Activated CD8-positive, alpha-beta T cell treated with anti-CD3 and anti-CD28 coated beads for 36 hours (primary cell): ENCODE measurements at regions of chr5 and their contacts with region 1.

Region 1: GRCh38 chr5:173331956-173332479 is 3.8 kb upstream of the STC2 start:
- DNase-seq: peak; percentile 95
- ATAC-seq: peak; percentile 76
- H3K4me3 Mint-ChIP-seq: no peak overlapping the region
- H3K27ac Mint-ChIP-seq: no peak overlapping the region
- H3K4me1 Mint-ChIP-seq: peaks cover 16% of the 10 kb centered on the region
- H3K27me3 Mint-ChIP-seq: peaks cover 40% of the 10 kb centered on the region
- CTCF ChIP-seq: peak; percentile 82

Region 2: GRCh38 chr5:173288632-173289031 is 43.4 kb before region 1 on chr5:
- CTCF ChIA-PET with region 1: interaction called, 180 read pairs
- POLR2A ChIA-PET with region 1: interaction called, 4 read pairs
- intact Hi-C with region 1: no loop called
- DNase-seq: no peak
- ATAC-seq: no peak
- H3K4me3 Mint-ChIP-seq: no peak overlapping the region
- H3K27ac Mint-ChIP-seq: no peak overlapping the region
- H3K4me1 Mint-ChIP-seq: peaks cover 14% of the 10 kb centered on the region
- H3K27me3 Mint-ChIP-seq: peaks cover 50% of the 10 kb centered on the region
- CTCF ChIP-seq: no peak

Region 3: DNA sequence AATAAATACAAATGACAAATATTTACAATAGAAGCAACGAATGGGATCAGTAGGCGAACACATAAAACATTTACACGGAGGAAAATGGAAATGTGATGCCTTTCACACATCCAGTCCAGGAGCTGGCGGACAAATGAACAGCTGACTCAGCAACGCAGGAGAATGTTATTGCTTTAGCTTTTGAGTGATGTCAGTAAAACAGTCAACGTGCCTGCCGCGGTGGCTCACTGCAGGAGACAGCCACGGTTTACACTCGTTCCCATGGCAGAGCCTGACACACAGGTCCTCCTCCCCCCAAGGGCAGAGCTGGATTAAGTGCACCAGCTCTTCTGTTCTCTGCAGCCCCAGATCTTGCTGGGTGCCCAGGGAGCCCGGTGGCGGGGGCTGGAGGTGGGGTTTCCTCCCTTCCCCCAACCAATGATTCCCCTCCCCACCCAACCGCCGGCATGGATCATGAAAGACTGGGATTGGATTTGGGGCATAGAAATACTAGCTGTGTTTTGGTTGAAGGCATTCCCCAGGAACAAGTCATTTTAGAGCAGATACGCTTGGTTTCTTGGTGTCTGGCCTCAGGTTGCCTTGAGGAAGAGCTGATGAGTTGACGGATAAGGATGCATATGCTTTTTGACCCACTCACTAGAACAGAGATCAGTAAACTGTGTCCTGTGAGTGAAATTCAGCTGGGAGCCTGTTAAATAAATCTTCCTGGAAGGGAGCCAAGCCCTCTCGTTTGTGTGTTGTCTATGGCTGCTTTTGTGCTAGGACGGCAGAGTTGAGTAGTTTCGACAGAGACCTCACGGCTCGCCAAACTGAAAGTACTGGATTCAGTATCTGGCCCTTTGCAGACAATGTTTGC is 16.3 kb before region 1 on chr5:
- CTCF ChIA-PET with region 1: interaction called, 12 read pairs
- POLR2A ChIA-PET with region 1: interaction called, 11 read pairs
- intact Hi-C with region 1: no loop called
- DNase-seq: peak; percentile 29
- ATAC-seq: peak; percentile 52
- H3K4me3 Mint-ChIP-seq: no peak overlapping the region
- H3K27ac Mint-ChIP-seq: no peak overlapping the region
- H3K4me1 Mint-ChIP-seq: no peaks in the 10 kb centered on the region
- H3K27me3 Mint-ChIP-seq: peaks cover 15% of the 10 kb centered on the region
- CTCF ChIP-seq: no peak

Region 4: GRCh38 chr5:173941758-173942401 is 609.9 kb after region 1 on chr5:
- CTCF ChIA-PET with region 1: no interaction called
- POLR2A ChIA-PET with region 1: no interaction called
- intact Hi-C with region 1: no loop called
- DNase-seq: no peak
- ATAC-seq: no peak
- H3K4me3 Mint-ChIP-seq: no peak overlapping the region
- H3K27ac Mint-ChIP-seq: no peak overlapping the region
- H3K4me1 Mint-ChIP-seq: no peaks in the 10 kb centered on the region
- H3K27me3 Mint-ChIP-seq: no peaks in the 10 kb centered on the region
- CTCF ChIP-seq: no peak